Activated CD8-positive, alpha-beta T cell treated with anti-CD3 and anti-CD28 coated beads for 36 hours (primary cell): ENCODE measurements at regions of chr1 and their contacts with region 1.

Region 1: DNA sequence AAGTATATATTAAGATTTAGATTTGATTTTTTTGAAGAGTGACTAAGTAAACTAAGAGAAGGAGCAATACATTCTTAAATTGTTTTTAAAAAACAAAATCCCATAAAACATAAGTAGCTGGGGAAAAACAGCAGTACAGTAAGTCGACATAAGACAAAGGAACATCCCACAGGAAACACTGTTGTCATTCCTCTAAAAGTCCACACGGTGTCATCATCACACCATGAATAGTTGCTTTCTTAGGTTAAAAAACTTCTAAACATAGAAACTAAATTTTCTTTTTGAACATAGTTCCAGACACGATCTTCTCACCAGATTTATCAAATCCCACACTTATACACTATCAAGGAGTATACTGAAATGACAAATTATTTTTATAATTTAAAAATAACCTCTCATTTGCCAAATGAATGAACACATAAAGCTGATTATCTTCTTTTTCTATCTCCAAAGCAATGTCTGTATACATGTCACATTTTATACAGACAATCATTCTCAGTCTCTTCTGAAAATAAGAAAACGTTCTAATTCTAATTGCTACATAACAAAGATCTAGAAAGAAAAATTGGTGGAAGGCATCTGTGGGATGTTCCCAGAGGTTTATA is 15.8 kb downstream of the ODF2L start:
- DNase-seq: peak; percentile 10
- ATAC-seq: peak; percentile 68
- H3K4me3 Mint-ChIP-seq: no peak overlapping the region
- H3K27ac Mint-ChIP-seq: no peak overlapping the region
- H3K4me1 Mint-ChIP-seq: peaks cover 8% of the 10 kb centered on the region
- H3K27me3 Mint-ChIP-seq: no peaks in the 10 kb centered on the region
- CTCF ChIP-seq: peak; percentile 81

Region 2: DNA sequence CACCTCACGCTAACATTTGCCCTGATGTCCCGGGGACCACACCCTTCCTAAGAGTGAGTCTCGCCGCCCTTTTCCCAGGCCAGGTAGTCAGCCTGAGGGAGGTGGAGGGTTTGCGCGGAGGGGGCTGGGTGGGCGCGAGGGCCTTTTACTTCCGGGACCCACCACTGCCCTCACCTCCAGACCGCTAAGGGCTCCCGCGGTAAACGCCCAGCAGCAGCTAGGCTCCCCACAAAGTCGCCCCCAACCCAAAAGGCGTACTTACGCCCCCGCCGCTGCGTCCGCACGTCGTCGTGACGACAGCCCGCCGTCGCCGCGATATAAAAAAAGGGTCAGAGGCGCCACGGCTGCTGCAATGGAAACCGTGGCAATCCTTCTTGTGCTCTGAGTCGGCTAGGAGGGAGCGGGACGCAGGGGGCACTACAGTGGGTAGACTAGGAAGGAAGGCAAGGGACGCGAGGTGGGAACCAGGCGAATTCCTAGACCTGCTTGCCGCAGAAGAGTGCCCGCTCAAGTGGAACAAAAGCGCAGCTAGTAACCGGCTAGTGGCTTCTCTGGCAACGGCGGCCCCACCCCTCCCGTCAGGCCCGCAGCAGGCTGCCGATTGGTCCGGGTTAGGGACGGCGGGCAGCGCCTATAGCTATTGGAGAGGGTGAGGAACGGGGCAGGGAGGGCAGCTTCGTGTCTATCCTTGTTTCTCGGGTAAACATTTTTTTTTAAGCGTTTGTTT is 15.6 kb after region 1 on chr1 and contains the start of gene ODF2L:
- CTCF ChIA-PET with region 1: interaction called, 10 read pairs
- POLR2A ChIA-PET with region 1: no interaction called
- intact Hi-C with region 1: no loop called
- DNase-seq: peak; percentile 93
- ATAC-seq: peak; percentile 100
- H3K4me3 Mint-ChIP-seq: peak within 1 kb of the TSS; percentile 95
- H3K27ac Mint-ChIP-seq: peak within 1 kb of the TSS; percentile 93
- H3K4me1 Mint-ChIP-seq: peaks cover 49% of the 10 kb centered on the region
- H3K27me3 Mint-ChIP-seq: no peaks in the 10 kb centered on the region
- CTCF ChIP-seq: no peak
- total RNA-seq, gene ODF2L: 21.7 to 23.8 TPM

Region 3: GRCh38 chr1:86507935-86508582 is 127.7 kb after region 1 on chr1:
- CTCF ChIA-PET with region 1: interaction called, 67 read pairs
- POLR2A ChIA-PET with region 1: no interaction called
- intact Hi-C with region 1: no loop called
- DNase-seq: peak; percentile 36
- ATAC-seq: peak; percentile 47
- H3K4me3 Mint-ChIP-seq: no peak overlapping the region
- H3K27ac Mint-ChIP-seq: no peak overlapping the region
- H3K4me1 Mint-ChIP-seq: peaks cover 4% of the 10 kb centered on the region
- H3K27me3 Mint-ChIP-seq: peaks cover 1% of the 10 kb centered on the region
- CTCF ChIP-seq: peak; percentile 50